CD14-positive monocyte (primary cell): ENCODE measurements at regions of chr11 and their contacts with region 1.

Region 1: DNA sequence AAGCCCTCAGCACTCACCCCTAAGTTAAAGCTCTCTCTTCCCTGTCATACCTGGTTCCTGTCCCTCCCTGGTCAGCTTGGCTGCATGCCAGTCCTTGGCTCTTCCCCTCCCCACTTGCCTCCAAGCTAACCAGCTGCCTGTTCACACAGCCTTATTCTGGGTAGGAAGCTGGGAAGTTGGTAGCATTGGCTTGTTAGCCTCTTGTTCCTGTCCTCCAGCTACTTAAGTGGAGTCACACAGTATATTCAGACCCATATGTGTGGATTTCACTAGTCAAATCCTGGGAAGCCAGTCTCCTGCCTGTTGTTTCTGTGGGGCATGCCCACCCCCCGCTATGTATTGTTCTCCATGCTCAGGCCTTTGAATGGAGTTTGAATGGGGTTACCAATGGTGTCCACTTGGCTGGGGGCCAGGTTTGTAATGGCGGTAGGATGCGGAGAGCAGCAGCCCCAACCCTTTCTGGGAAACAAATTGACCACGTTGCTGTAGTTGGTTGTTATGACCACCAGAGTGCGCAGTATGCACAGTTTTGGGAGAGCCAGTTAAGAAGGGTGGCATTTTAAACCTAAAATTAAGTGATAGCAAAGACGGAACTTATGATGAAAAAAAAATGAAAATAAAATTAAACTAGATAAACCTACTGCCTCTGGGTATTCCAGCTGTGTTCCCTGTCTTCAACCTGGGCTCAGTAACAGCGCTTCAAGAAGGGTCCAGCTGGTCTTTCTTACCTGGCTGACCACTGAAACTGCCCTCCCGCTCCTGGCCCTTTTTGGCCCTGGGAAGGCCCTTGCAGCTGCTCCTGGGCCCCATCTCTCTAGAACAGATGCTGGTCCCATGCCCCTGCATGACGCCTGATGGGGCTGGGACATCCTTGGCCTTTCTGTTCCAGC is 10.7 kb upstream of the RPS3 start:
- DNase-seq: peak; percentile 70 to 75 (median 75)
- H3K4me3 ChIP-seq: no peak overlapping the region
- H3K4me3 Mint-ChIP-seq: no peak overlapping the region
- H3K27ac ChIP-seq: no peak overlapping the region
- H3K27ac Mint-ChIP-seq: no peak overlapping the region
- H3K4me1 ChIP-seq: peaks cover 17 to 20% of the 10 kb centered on the region in 2 donors
- H3K4me1 Mint-ChIP-seq: peaks cover 10% of the 10 kb centered on the region
- H3K27me3 ChIP-seq: no peaks in the 10 kb centered on the region
- H3K27me3 Mint-ChIP-seq: peaks cover 2 to 5% (median 4%) of the 10 kb centered on the region in 3 donors
- CTCF ChIP-seq: peak; percentile 81

Region 2: GRCh38 chr11:75182669-75183068 is 206.0 kb before region 1 on chr11:
- intact Hi-C with region 1: no loop called
- DNase-seq: no peak
- H3K4me3 ChIP-seq: no peak overlapping the region
- H3K4me3 Mint-ChIP-seq: peak overlapping the region in 1 of 2 donors; percentile 59
- H3K27ac ChIP-seq: no peak overlapping the region
- H3K27ac Mint-ChIP-seq: peak overlapping the region in 3 of 7 donors; percentile 30 to 42 (median 35)
- H3K4me1 ChIP-seq: peaks cover 18 to 24% of the 10 kb centered on the region in 2 donors
- H3K4me1 Mint-ChIP-seq: peaks cover 21% of the 10 kb centered on the region
- H3K27me3 ChIP-seq: no peaks in the 10 kb centered on the region
- H3K27me3 Mint-ChIP-seq: peaks cover 8 to 13% (median 12%) of the 10 kb centered on the region in 3 donors
- CTCF ChIP-seq: no peak

Region 3: DNA sequence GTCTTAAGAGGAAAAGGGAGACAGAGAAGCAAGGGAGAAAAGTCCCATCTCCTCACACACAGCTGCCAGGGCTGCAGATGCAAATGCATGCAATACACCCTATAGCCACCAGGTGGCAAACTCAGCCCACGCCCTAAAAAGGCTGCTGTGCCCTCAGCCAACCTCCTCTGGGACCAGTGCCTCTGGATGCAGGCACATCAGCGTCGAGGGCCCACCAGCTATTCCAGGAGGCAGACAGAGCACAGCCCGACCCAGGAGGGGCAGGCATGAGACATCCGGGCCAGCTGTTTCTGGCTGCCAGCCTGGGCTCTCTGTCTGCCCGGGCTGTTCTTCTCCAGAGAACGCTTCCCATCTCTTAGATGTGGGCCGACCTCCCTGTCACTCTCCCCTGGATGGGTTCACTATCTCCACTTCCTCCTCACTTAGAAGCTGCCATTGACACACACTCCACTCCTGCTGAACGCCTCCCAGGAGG is 108.4 kb before region 1 on chr11:
- intact Hi-C with region 1: loop called (anchors 1 to 2 kb)
- DNase-seq: peak; percentile 52 to 59 (median 58)
- H3K4me3 ChIP-seq: no peak overlapping the region
- H3K4me3 Mint-ChIP-seq: no peak overlapping the region
- H3K27ac ChIP-seq: peak overlapping the region in 1 of 2 donors; percentile 65
- H3K27ac Mint-ChIP-seq: peak overlapping the region in 6 of 7 donors; percentile 20 to 89 (median 48)
- H3K4me1 ChIP-seq: peaks cover 20 to 22% of the 10 kb centered on the region in 2 donors
- H3K4me1 Mint-ChIP-seq: peaks cover 30% of the 10 kb centered on the region
- H3K27me3 ChIP-seq: no peaks in the 10 kb centered on the region
- H3K27me3 Mint-ChIP-seq: peaks cover 0 to 2% (median 0%) of the 10 kb centered on the region in 3 donors
- CTCF ChIP-seq: peak; percentile 97

Region 4: GRCh38 chr11:75328426-75329277 is 60.0 kb before region 1 on chr11:
- intact Hi-C with region 1: loop called in 1 of 2 experiments (anchors 2 kb)
- DNase-seq: peak; percentile 52 to 74 (median 64)
- H3K4me3 ChIP-seq: peak overlapping the region in 1 of 3 experiments; percentile 25
- H3K4me3 Mint-ChIP-seq: no peak overlapping the region
- H3K27ac ChIP-seq: peak overlapping the region; percentile 25 to 79
- H3K27ac Mint-ChIP-seq: peak overlapping the region; percentile 69 to 91 (median 81)
- H3K4me1 ChIP-seq: peaks cover 28 to 37% of the 10 kb centered on the region in 2 donors
- H3K4me1 Mint-ChIP-seq: peaks cover 60% of the 10 kb centered on the region
- H3K27me3 ChIP-seq: no peaks in the 10 kb centered on the region
- H3K27me3 Mint-ChIP-seq: no peaks in the 10 kb centered on the region
- CTCF ChIP-seq: peak; percentile 76

Region 5: DNA sequence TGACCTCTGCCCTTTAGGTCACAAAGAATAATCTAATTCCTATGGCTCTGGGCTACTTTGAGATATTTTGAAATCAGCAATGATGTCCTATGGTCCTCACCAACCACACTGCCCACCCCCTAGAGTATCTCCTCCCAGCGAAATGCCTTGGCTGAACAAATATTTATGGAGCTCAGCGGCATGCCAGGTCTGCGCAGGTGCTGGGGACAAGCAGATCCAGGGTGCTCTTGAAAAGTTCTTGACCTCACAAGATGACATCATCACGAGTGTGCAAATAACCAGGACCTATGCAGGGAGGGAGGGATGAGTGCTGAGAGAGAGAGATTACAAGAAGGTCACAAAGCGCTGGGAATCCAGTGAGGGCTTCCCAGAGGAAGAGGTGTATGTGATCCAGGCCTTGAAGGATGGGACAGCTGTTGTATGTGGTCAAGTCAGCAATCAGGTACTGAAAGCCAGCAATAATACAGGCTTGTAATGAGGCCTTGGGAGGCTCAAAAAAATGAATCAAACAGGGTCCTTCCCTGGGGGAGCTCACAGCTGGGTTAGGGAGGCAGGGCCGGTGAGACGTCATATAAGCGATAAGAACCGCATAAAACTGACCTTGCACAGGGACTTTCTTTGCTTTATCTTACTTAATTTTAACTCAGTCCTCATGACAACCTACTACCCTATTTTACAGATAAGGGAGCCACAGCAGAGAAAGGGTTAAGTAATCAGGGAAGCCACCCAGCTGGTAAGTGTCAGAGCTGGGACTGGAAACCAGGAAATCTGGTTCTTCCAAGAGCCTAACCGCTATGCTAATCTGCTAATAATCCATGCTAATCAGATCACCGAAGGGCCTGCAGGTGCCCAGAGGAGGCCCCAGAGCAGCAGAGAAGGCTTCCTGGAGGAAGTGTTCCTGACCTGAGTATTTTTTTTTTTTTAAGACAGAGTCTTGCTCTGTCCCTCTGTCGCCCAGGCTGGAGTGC is 45.4 kb before region 1 on chr11:
- intact Hi-C with region 1: loop called (anchors 5 kb)
- DNase-seq: peak in 1 of 3 donors; percentile 52
- H3K4me3 ChIP-seq: peak overlapping the region; percentile 6 to 98 (median 14)
- H3K4me3 Mint-ChIP-seq: peak overlapping the region; percentile 64 to 83
- H3K27ac ChIP-seq: peak overlapping the region; percentile 79 to 94
- H3K27ac Mint-ChIP-seq: peak overlapping the region; percentile 87 to 97 (median 91)
- H3K4me1 ChIP-seq: peaks cover 100% of the 10 kb centered on the region in 2 donors
- H3K4me1 Mint-ChIP-seq: peaks cover 100% of the 10 kb centered on the region
- H3K27me3 ChIP-seq: no peaks in the 10 kb centered on the region
- H3K27me3 Mint-ChIP-seq: no peaks in the 10 kb centered on the region
- CTCF ChIP-seq: no peak

Region 6: DNA sequence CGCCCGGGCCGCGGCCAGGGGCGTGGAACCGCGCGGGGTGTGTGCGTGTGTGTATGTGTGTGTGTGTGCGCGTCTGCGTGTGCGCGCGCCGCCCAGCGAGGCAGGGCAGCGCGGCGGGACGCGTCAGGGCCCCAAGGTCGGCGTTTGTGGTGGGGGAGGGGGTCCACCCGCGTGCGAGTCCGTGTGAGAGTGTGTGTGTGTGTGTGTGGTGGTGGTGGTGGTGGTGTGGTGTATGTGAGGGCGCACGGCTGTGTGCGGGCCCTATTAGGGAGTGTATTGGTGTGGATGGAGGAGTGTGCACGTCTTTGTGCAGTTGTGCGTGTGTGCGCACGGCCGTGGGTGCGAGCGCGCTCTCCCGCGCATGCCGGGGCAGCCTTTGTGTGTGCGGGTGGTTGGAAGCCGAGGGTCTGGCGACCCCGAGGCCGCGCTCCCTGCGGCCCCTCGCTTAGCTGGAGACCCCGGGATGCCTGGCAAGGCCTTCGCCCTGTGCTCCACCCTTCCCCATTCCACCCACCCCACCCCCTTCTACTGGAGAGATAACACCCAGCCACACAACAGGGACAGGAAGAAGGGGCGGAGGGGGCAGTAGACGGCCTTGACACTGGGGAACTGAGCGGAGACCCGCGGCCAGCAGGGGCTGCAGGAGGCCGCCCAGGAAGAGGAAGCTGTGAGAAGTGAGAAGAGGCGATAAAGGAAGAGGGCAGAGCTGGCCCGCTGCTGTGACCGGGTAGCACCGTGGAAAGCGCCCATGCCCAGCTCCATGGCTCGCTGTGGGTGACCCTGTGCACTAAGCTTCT is 36.6 kb before region 1 on chr11:
- intact Hi-C with region 1: loop called in 1 of 2 experiments (anchors 5 kb)
- DNase-seq: peak; percentile 82 to 87 (median 84)
- H3K4me3 ChIP-seq: peak overlapping the region; percentile 76 to 98 (median 79)
- H3K4me3 Mint-ChIP-seq: peak overlapping the region; percentile 84 to 92
- H3K27ac ChIP-seq: peak overlapping the region; percentile 77 to 94
- H3K27ac Mint-ChIP-seq: peak overlapping the region; percentile 90 to 97 (median 94)
- H3K4me1 ChIP-seq: peaks cover 45 to 62% of the 10 kb centered on the region in 2 donors
- H3K4me1 Mint-ChIP-seq: peaks cover 67% of the 10 kb centered on the region
- H3K27me3 ChIP-seq: no peaks in the 10 kb centered on the region
- H3K27me3 Mint-ChIP-seq: peaks cover under 1 to 3% (median 2%) of the 10 kb centered on the region in 3 donors
- CTCF ChIP-seq: peak; percentile 30

Region 7: GRCh38 chr11:75532200-75533048 is 143.8 kb after region 1 on chr11:
- intact Hi-C with region 1: loop called (anchors 2 kb)
- DNase-seq: peak; percentile 62 to 73 (median 68)
- H3K4me3 ChIP-seq: no peak overlapping the region
- H3K4me3 Mint-ChIP-seq: no peak overlapping the region
- H3K27ac ChIP-seq: no peak overlapping the region
- H3K27ac Mint-ChIP-seq: no peak overlapping the region
- H3K4me1 ChIP-seq: peaks cover 14 to 15% of the 10 kb centered on the region in 2 donors
- H3K4me1 Mint-ChIP-seq: peaks cover 25% of the 10 kb centered on the region
- H3K27me3 ChIP-seq: no peaks in the 10 kb centered on the region
- H3K27me3 Mint-ChIP-seq: peaks cover 6 to 18% (median 7%) of the 10 kb centered on the region in 3 donors
- CTCF ChIP-seq: peak; percentile 97